WTC11 (cell line): ENCODE measurements at regions of chr11 and their contacts with region 1.

Region 1: DNA sequence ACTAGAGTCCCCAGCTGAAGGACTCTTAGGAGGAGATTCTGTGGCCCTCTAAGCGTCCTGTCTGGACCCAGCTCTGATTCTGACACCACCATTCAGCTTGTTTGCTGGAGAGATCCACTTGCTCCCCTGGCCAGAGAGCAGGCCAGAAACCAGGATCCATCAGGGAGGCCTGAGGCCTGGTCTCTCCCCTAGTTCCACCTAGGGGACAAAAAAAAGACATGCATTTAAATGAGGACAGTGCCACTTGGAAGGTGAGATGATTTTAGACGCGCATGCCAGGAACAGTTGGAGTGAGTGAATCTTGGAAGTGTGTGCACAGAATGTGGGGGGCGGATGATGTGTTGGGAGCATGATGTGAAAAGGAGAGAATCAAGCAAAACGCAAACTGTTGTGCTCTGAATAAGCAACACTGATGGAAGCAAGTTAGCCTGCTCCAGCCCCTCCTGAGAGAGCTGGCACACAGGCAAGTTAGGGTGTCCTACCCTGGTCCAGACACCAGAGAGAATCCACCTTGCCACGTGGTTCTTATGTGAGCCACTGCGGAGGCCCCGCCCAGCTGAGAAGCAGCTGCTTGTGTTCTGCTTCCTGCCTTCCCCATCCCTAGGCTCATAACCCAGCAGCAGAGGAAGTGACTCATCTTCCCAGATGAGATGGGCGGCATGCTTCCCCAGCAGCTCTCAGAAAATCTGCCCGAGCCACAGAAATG is 8.0 kb upstream of the SLCO2B1 start:
- DNase-seq: no peak
- ATAC-seq: peak; percentile 60
- H3K4me3 Mint-ChIP-seq: no peak overlapping the region
- H3K27ac Mint-ChIP-seq: no peak overlapping the region
- H3K4me1 Mint-ChIP-seq: peaks cover 8% of the 10 kb centered on the region
- H3K27me3 Mint-ChIP-seq: peaks cover 6% of the 10 kb centered on the region
- CTCF ChIP-seq: no peak

Region 2: DNA sequence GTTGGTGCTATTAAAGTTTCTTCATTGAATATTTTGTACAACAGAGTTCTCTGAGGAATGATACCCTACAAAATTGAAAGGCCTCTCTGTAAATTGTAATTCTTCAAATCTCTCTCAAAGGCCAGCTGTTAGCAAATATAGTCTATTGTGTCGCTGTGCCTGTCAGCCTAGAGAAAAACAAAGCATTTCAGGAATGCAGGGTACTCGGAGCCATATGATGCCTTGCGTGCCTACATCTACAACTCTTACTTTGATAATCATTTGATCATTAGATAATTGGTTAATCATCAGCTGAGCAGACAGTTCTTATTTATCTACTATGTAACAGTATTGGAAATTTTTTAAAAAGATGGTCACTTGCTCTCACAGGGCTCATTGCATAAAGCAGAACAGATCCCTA is 326.9 kb before region 1 on chr11:
- CTCF ChIA-PET with region 1: no interaction called
- POLR2A ChIA-PET with region 1: no interaction called
- DNase-seq: no peak
- ATAC-seq: no peak
- H3K4me3 Mint-ChIP-seq: no peak overlapping the region
- H3K27ac Mint-ChIP-seq: no peak overlapping the region
- H3K4me1 Mint-ChIP-seq: no peaks in the 10 kb centered on the region
- H3K27me3 Mint-ChIP-seq: no peaks in the 10 kb centered on the region
- CTCF ChIP-seq: no peak

Region 3: DNA sequence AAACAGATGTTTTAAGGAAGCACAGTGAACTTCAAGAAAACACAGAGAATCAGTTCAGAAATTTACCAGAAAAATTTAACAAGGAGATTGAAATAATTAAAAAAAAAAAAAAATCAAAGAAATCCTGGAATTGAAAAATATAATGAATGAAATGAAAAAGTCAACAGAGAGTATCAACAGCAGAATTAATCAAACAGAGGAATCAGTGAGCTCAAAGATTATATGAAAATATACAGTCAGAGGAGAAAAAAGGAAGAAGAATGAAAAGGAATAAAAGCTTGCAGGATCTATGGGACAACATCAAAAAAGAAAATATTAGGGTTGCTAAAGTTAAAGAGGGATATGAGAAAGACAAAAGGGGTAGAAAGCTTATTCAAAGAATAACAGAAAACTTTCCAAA is 276.3 kb before region 1 on chr11:
- CTCF ChIA-PET with region 1: no interaction called
- POLR2A ChIA-PET with region 1: no interaction called
- DNase-seq: no peak
- ATAC-seq: no peak
- H3K4me3 Mint-ChIP-seq: no peak overlapping the region
- H3K27ac Mint-ChIP-seq: no peak overlapping the region
- H3K4me1 Mint-ChIP-seq: no peaks in the 10 kb centered on the region
- H3K27me3 Mint-ChIP-seq: no peaks in the 10 kb centered on the region; the same call in 1 of the 2 replicates
- CTCF ChIP-seq: no peak

Region 4: GRCh38 chr11:74929431-74930363 is 213.2 kb before region 1 on chr11:
- CTCF ChIA-PET with region 1: interaction called, 15 read pairs
- POLR2A ChIA-PET with region 1: no interaction called
- DNase-seq: peak; percentile 53
- ATAC-seq: peak; percentile 95
- H3K4me3 Mint-ChIP-seq: no peak overlapping the region
- H3K27ac Mint-ChIP-seq: no peak overlapping the region
- H3K4me1 Mint-ChIP-seq: no peaks in the 10 kb centered on the region
- H3K27me3 Mint-ChIP-seq: no peaks in the 10 kb centered on the region
- CTCF ChIP-seq: peak; percentile 56; the same call in 1 of the 2 replicates

Region 5: GRCh38 chr11:75160192-75160757 is 17.4 kb after region 1 on chr11:
- CTCF ChIA-PET with region 1: interaction called, 18 read pairs
- POLR2A ChIA-PET with region 1: no interaction called
- DNase-seq: no peak
- ATAC-seq: no peak
- H3K4me3 Mint-ChIP-seq: no peak overlapping the region
- H3K27ac Mint-ChIP-seq: no peak overlapping the region
- H3K4me1 Mint-ChIP-seq: peaks cover 11% of the 10 kb centered on the region
- H3K27me3 Mint-ChIP-seq: no peaks in the 10 kb centered on the region
- CTCF ChIP-seq: no peak

Region 6: DNA sequence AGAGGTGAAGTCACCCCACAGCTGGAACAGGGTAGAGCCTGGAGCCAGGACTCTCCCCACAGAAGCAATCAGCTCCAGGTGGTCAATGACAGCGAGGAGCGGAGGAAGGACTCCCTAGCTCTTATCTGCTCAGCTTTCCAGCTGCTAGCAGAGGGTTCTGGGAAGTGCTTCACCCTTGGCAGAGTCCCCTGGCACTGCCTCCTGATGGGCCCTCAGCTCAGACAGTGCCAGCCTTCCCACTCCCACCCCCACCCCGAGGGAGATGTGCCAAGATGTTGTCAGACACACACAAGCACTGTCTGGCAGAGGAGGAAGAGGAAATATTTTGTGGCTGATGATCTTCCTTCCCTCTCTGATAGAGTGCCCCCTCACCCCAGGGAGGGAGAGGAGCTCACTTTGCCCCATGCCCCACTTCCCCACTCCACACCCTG is 52.3 kb after region 1 on chr11:
- CTCF ChIA-PET with region 1: interaction called, 590 read pairs
- POLR2A ChIA-PET with region 1: no interaction called
- DNase-seq: no peak
- ATAC-seq: no peak
- H3K4me3 Mint-ChIP-seq: no peak overlapping the region
- H3K27ac Mint-ChIP-seq: no peak overlapping the region
- H3K4me1 Mint-ChIP-seq: peaks cover 15% of the 10 kb centered on the region
- H3K27me3 Mint-ChIP-seq: no peaks in the 10 kb centered on the region
- CTCF ChIP-seq: no peak

Region 7: GRCh38 chr11:75223954-75224643 is 81.2 kb after region 1 on chr11:
- CTCF ChIA-PET with region 1: interaction called, 46 read pairs
- POLR2A ChIA-PET with region 1: no interaction called
- DNase-seq: no peak
- ATAC-seq: peak; percentile 85
- H3K4me3 Mint-ChIP-seq: no peak overlapping the region
- H3K27ac Mint-ChIP-seq: no peak overlapping the region
- H3K4me1 Mint-ChIP-seq: peaks cover 7% of the 10 kb centered on the region; the same call in 1 of the 2 replicates
- H3K27me3 Mint-ChIP-seq: peaks cover under 1% of the 10 kb centered on the region; the same call in 1 of the 2 replicates
- CTCF ChIP-seq: no peak

Region 8: DNA sequence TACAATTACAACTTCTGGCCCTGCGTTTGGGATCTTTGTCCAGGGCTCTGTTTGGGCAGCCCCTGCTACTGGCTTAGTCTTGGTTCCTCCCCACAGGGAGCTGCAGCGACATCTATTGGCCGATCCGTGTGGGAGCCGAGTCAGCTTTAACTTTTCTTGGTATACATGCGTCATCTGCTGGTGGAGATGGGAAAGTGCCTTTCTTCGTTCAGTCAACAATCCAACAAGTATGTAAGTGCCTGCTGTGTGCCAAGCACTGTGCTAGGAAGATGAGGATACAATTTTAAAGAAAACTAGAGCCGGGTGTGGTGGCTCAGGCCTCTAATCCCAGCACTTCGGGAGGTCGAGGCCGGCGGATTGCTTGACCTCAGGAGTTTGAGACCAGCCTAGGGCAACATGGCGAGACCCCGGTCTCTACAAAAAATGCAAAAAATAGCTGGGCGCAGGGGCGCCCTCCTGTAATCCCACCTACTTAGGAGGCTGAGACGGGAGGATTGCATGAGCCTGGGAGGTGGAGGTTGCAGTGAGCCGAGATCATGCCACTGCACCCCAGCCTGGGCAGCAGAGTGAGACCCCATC is 105.9 kb after region 1 on chr11:
- CTCF ChIA-PET with region 1: interaction called, 160 read pairs
- POLR2A ChIA-PET with region 1: no interaction called
- DNase-seq: peak; percentile 94
- ATAC-seq: peak; percentile 89
- H3K4me3 Mint-ChIP-seq: no peak overlapping the region
- H3K27ac Mint-ChIP-seq: no peak overlapping the region
- H3K4me1 Mint-ChIP-seq: no peaks in the 10 kb centered on the region
- H3K27me3 Mint-ChIP-seq: peaks cover 68% of the 10 kb centered on the region
- CTCF ChIP-seq: peak; percentile 86